GM18951 (cell line): ENCODE measurements at regions of chr1 and their contacts with region 1.

Region 1: DNA sequence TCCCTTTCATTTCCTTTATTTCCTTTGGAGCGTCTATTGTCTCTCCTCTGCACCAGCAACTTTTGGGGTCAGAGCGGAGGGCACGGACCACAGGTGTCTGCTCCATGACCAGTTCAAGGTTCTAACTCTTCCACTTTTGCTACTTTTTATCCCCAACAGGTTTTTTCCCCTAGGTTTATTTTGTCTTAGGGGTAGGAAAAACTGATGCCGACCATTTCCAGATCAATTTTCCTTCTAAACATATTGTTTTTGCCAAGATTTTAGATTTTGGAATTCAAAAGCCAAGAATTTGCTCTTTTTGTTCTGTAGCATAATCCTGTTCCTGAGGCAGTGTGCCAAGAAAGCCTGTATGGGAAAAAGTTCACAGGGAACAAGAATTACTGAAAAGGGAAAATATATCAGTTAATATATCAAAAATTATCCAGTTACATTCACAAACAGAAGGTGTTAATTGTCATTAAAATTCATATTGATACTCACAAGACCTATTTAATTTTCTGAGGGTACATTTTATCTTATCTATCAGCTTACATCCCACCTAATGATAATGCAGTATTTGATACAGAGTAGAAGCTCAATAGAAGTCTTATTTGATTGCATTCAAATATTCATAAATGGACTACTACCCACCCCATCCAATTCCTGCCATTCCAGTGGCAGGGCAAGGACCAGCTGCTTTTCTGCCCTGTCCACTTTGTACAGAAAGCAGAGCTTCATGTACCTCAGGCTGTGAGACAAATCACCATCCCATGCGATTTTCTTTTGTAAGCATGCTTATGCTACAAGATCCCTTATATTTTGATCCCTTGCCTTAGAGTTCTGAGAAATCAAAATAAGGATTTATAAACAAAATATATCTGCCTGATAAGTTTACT is 31.2 kb downstream of the TSEN15 start:
- POLR2A ChIP-seq: no peak

Region 2: GRCh38 chr1:183956559-183957188 is 126.1 kb before region 1 on chr1:
- in situ Hi-C with region 1: no loop called
- POLR2A ChIP-seq: no peak

Region 3: DNA sequence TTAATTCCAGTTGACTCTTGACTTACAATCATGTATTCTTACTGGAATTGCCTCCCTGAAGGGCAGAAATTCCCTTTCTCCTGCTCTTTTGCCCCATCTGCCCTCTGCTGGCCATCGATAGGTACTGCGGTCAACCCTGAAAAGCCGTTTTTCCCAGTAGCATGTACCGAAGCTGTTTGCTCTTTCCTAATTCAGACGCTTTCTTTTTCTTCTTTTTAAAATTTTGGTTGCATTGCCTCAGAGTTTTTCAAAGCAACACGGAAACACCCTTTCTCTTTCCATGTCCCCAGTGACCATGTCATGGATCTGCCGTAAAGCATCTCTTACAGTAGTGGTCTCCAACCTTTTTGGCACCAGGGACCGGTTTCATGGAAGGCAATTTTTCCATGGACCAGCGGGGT is 139.9 kb after region 1 on chr1:
- in situ Hi-C with region 1: loop called (anchors 10 kb)
- POLR2A ChIP-seq: no peak